A673 (cell line): ENCODE measurements at regions of chr11 and their contacts with region 1.

Region 1: GRCh38 chr11:27209562-27210005 is 153.4 kb downstream of the CCDC34 start:
- DNase-seq: peak; percentile 100
- H3K4me3 ChIP-seq: no peak overlapping the region
- H3K27ac ChIP-seq: no peak overlapping the region
- H3K4me1 ChIP-seq: peaks cover 76% of the 10 kb centered on the region
- H3K27me3 ChIP-seq: no peaks in the 10 kb centered on the region
- CTCF ChIP-seq: no peak

Region 2: DNA sequence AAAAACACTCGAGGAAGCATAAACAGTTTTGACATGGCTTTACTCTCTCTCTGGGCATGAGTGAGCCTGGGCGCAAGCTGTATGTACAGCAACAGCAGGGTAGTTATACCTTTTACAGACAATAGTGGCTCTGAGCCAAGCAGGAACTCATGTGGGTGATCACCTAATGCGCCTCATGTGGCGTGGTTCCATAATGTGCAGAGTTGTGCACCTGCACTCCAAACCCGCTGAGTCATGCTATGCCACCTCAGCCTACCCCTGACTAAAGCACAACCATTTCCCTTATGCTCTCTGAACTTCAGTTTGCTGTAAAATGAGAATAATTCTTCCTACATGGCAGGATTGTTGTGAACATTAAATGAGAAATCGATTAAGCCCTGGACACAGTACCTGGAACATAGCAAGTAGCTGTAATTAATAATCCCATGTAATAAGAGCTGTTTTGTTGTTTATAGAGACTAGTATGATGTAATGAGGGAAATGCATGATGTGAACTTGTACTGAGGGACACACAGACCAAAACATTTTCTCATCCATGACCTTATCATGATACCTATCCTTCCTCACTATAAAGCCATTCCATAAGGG is 81.8 kb after region 1 on chr11:
- CTCF ChIA-PET with region 1: interaction called, 13 read pairs
- POLR2A ChIA-PET with region 1: no interaction called
- intact Hi-C with region 1: loop called (anchors 5 kb)
- DNase-seq: no peak
- H3K4me3 ChIP-seq: no peak overlapping the region
- H3K27ac ChIP-seq: no peak overlapping the region
- H3K4me1 ChIP-seq: peaks cover 18% of the 10 kb centered on the region
- H3K27me3 ChIP-seq: no peaks in the 10 kb centered on the region
- CTCF ChIP-seq: no peak

Region 3: GRCh38 chr11:27296497-27296896 is 86.9 kb after region 1 on chr11:
- CTCF ChIA-PET with region 1: interaction called, 13 read pairs
- POLR2A ChIA-PET with region 1: no interaction called
- intact Hi-C with region 1: loop called (anchors 5 kb)
- DNase-seq: peak; percentile 91
- H3K4me3 ChIP-seq: no peak overlapping the region
- H3K27ac ChIP-seq: no peak overlapping the region
- H3K4me1 ChIP-seq: peaks cover 18% of the 10 kb centered on the region
- H3K27me3 ChIP-seq: no peaks in the 10 kb centered on the region
- CTCF ChIP-seq: peak; percentile 100

Region 4: DNA sequence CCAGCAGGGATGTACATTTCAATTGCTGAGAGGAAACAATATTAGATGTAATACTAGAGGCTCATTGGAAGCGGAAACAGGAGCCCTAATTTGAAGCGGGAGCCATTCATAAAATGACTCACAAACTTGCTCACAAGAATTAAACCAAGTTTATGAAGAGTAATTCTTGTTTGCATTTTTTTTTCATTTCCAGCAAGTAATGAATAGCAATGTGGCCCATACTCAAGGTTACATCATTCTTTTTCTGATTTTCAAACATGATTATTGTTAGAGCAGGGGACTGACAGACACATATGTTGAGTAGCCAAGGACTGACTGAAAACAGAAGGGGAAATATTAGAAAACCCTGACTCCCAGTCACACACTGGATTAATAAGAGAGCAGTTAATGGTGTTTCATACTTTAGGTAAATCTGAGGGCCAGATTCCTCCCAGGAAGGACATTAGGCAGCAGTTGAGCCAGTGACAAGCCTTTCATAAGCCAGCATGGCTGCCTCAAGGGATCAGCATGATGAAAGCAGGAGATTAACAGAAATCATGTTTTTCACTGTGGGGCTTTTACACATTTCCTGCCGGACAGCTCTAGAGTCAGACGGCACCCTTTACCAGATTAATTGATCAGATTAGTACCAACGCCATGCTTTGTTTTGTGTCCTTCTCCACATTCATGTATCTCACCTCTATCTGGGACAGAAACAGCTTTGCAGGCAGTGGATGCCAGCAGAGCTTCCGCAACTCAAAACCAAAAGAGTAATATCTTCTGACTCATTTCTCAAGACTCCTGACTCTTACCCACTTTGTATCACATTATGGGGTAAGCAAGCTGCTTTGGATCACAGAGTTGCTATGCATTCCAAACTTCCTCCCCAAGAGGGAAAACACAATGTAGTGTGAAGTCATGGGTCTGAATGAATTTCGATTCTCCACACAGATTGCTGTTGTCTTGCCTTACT is 1975.6 kb after region 1 on chr11:
- CTCF ChIA-PET with region 1: no interaction called
- POLR2A ChIA-PET with region 1: no interaction called
- intact Hi-C with region 1: loop called (anchors 10 kb)
- DNase-seq: peak; percentile 100
- H3K4me3 ChIP-seq: peak overlapping the region; percentile 17
- H3K27ac ChIP-seq: peak overlapping the region; percentile 95
- H3K4me1 ChIP-seq: peaks cover 51% of the 10 kb centered on the region
- H3K27me3 ChIP-seq: no peaks in the 10 kb centered on the region
- CTCF ChIP-seq: no peak